ENCODE measurements at regions of chr14 and their contacts with region 1.

Region 1: GRCh38 chr14:63632932-63633514 is 8.6 kb downstream of the WDR89 start:
- DNase-seq: no peak
- H3K4me3 Mint-ChIP-seq: no peak overlapping the region
- H3K27ac Mint-ChIP-seq: no peak overlapping the region
- H3K4me1 Mint-ChIP-seq: peaks cover 40% of the 10 kb centered on the region
- H3K27me3 Mint-ChIP-seq: no peaks in the 10 kb centered on the region

Region 2: DNA sequence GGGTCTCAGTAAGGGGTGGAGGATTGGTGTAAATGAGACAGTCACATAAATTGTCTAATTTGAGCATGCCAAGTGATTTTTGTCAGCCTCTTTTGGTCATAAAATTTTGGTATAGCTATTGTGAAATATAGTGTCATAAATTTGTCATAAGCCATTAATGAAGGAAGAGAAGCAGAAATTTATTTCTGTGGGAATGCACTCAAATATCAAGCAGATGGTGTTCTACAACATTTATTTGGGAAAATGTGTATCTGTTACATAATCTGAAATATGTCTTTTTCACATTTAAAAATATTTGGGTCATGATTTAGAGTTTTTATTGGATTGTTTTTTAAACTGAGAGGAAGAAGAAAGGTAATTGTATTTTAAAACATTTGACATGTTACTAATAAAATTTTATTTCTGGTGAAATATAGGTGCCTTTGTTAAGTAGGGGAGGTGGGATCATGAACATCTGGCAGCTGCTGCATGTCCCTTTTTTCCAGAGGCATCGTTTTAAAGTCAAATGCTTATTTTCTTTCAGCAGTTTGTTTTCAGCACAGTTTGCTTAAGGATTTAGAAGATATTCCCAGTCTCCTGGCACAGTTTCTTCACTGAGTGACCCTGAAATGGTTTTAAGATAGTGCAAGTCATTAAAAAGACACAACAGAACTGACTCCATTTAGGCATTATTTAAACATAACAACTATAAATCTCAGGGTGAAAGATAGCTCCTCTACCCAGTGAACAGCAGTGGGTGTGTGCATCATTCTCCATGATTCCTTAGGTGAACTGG is 1499.1 kb before region 1 on chr14:
- CTCF ChIA-PET with region 1: no interaction called
- POLR2A ChIA-PET with region 1: no interaction called
- intact Hi-C with region 1: no loop called
- DNase-seq: no peak
- H3K4me3 Mint-ChIP-seq: no peak overlapping the region
- H3K27ac Mint-ChIP-seq: no peak overlapping the region
- H3K4me1 Mint-ChIP-seq: no peaks in the 10 kb centered on the region
- H3K27me3 Mint-ChIP-seq: peaks cover 28% of the 10 kb centered on the region

Region 3: GRCh38 chr14:63388763-63389431 is 244.1 kb before region 1 on chr14:
- CTCF ChIA-PET with region 1: interaction called, 9 read pairs
- POLR2A ChIA-PET with region 1: no interaction called
- intact Hi-C with region 1: loop called (anchors 10 kb)
- DNase-seq: peak; percentile 76
- H3K4me3 Mint-ChIP-seq: no peak overlapping the region
- H3K27ac Mint-ChIP-seq: no peak overlapping the region
- H3K4me1 Mint-ChIP-seq: peaks cover under 1% of the 10 kb centered on the region
- H3K27me3 Mint-ChIP-seq: no peaks in the 10 kb centered on the region

Region 4: DNA sequence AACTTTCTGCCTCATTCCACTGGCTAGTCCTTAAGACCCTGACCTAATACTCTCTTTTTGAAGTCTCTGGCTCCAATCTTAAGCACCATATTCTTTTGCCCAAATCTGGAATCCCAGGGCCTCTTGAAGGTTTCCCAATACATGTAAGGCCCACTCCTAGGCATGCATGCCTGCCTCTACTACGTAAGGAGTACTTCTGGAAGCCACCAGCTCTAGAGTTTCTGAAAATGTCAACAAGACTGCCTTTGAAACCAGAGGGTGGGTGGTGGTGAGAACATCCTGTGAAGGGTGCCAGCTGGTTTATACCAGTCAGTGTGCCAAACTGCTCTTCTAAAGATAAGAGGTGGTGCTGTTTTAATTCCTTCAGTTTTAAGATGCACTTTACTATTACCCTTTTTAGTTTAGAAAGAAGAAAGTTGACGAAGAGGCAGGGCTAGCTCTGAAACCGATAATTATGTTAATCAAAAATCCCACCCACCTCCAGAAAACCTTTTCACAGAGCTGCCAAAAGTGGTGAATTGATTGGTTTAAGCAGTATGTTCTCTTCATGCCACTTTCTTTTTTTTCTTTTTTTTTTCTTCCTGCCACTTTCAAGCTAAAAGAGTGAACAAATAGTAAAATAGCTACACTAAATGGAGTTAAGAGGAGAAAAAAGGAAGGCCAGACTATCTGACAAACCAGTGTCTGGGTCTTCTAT is 17.4 kb after region 1 on chr14:
- CTCF ChIA-PET with region 1: interaction called, 10 read pairs
- POLR2A ChIA-PET with region 1: no interaction called
- intact Hi-C with region 1: no loop called
- DNase-seq: peak; percentile 75
- H3K4me3 Mint-ChIP-seq: peak overlapping the region; percentile 46
- H3K27ac Mint-ChIP-seq: peak overlapping the region; percentile 93
- H3K4me1 Mint-ChIP-seq: peaks cover 40% of the 10 kb centered on the region
- H3K27me3 Mint-ChIP-seq: no peaks in the 10 kb centered on the region

Region 5: DNA sequence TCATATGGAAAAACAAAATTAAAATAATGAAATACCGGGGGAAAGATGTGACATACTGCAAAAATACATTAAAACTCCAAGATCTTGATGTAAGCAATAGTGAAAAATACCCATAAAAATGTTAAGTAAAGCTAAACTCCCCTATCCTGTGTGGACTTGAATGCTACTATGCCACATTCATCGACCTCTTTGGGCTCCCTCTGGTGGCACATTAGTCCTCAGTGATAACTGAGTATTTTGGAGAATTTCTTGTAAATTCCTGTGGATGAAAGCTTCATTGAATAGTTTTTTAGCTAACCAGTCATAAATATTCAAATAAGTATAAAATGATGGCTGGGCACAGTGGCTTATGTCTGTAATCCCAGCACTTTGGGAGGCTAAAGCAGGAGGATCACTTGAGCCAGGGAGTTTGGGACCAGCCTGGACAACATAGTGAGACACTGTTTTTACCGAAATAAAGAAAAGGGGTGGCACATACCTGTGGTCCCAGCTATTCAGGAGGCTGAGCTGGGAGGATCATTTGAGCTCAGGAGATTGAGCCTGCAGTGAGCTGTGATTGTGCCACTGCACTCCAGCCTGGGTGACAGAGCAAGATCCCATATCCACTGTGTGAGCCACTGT is 137.3 kb after region 1 on chr14:
- CTCF ChIA-PET with region 1: interaction called, 17 read pairs
- POLR2A ChIA-PET with region 1: no interaction called
- intact Hi-C with region 1: loop called (anchors 1 kb)
- DNase-seq: peak; percentile 54
- H3K4me3 Mint-ChIP-seq: no peak overlapping the region
- H3K27ac Mint-ChIP-seq: no peak overlapping the region
- H3K4me1 Mint-ChIP-seq: peaks cover 2% of the 10 kb centered on the region
- H3K27me3 Mint-ChIP-seq: no peaks in the 10 kb centered on the region

Measured in activated CD4-positive, alpha-beta memory T cell treated with anti-CD3 and anti-CD28 coated beads for 36 hours (primary cell).